WTC11 (cell line): ENCODE measurements at regions of chr16 and their contacts with region 1.

Region 1: DNA sequence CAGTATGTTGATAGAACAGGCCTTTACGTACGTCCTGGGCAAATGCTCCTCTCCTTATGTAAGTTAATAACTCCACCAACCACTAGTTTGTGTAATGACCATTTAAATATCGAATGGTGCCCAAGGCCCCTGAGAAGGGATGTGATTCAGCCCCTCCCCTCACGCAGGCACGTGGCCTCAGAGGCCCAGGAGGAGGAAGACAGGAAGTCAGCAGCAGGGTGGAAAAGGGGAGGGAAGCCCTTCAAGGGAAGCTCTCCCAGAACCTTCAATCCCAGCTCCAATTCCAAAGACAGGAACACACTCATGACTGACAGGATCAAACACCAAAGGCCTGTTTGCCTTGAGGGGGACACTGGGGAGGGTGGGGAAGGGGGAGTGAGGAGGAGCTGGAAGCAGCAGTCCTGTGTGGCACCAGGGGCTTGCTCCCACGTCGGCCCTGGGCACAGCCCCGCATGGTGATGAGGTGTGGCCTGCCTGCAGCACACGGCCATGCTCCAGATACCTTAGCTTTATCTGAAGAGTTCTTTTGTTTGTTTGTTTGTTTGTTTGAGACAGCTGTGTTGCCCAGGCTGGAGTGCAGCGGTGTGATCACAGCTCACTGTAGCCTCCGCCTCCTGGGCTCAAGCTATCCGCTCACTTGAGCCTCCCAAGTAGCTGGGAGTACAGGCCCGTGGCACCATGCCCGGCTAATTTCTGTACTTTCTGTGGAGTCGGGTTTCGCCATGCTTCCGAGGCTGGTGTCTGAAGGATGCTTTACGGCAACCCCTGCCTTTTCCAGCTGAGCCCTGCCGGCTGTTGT is 105.0 kb downstream of the ZNF778 start:
- DNase-seq: peak; percentile 60
- ATAC-seq: peak; percentile 66
- H3K4me3 Mint-ChIP-seq: peak overlapping the region; percentile 42
- H3K27ac Mint-ChIP-seq: peak overlapping the region; percentile 97
- H3K4me1 Mint-ChIP-seq: peaks cover 90% of the 10 kb centered on the region
- H3K27me3 Mint-ChIP-seq: no peaks in the 10 kb centered on the region
- CTCF ChIP-seq: no peak

Region 2: GRCh38 chr16:89308390-89309333 is 13.9 kb before region 1 on chr16:
- CTCF ChIA-PET with region 1: interaction called, 15 read pairs
- POLR2A ChIA-PET with region 1: no interaction called
- DNase-seq: peak; percentile 73
- ATAC-seq: peak; percentile 81
- H3K4me3 Mint-ChIP-seq: no peak overlapping the region
- H3K27ac Mint-ChIP-seq: peak overlapping the region; percentile 64
- H3K4me1 Mint-ChIP-seq: peaks cover 13% of the 10 kb centered on the region
- H3K27me3 Mint-ChIP-seq: no peaks in the 10 kb centered on the region
- CTCF ChIP-seq: peak; percentile 74

Region 3: DNA sequence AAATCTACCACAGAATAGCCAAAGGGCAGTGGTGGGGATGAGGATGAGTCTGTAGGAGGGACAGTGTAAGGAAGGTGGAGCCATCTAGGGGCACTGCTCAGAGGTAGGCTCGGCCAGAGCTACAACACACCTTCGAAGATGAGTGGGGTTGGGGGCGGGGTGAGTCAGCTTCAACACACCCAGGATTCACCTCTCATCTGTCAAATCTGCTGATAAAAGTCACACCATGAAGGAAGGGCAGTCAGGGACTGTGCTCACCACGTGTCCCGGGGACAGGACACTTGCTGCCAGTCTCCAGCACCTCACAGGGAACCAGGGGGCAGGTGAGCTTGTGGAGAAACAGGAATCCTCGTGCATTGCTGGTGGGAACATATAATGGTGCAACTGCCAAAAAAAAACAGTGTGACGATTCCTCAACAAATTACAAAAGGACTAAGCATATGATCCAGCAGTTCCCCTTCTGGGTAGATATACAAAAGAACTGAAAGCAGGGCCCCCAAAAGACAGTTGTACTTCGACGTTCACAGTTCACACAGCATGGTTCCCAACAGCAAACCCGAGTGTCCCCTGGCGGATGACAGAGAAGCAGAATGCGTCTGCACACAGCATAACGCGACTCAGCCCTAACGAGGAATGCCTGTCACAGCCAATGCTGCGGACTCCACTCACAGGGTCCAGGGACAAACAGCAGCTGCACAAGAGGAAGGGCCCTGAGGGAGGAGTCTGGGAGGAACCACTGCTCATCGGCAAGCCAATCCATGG is 34.7 kb after region 1 on chr16:
- CTCF ChIA-PET with region 1: interaction called, 11 read pairs
- POLR2A ChIA-PET with region 1: interaction called, 5 read pairs
- DNase-seq: no peak
- ATAC-seq: peak; percentile 77
- H3K4me3 Mint-ChIP-seq: no peak overlapping the region
- H3K27ac Mint-ChIP-seq: peak overlapping the region; percentile 47
- H3K4me1 Mint-ChIP-seq: peaks cover 75% of the 10 kb centered on the region
- H3K27me3 Mint-ChIP-seq: no peaks in the 10 kb centered on the region
- CTCF ChIP-seq: no peak